SK-N-SH (cell line): ENCODE measurements at regions of chr18 and their contacts with region 1.

Region 1: DNA sequence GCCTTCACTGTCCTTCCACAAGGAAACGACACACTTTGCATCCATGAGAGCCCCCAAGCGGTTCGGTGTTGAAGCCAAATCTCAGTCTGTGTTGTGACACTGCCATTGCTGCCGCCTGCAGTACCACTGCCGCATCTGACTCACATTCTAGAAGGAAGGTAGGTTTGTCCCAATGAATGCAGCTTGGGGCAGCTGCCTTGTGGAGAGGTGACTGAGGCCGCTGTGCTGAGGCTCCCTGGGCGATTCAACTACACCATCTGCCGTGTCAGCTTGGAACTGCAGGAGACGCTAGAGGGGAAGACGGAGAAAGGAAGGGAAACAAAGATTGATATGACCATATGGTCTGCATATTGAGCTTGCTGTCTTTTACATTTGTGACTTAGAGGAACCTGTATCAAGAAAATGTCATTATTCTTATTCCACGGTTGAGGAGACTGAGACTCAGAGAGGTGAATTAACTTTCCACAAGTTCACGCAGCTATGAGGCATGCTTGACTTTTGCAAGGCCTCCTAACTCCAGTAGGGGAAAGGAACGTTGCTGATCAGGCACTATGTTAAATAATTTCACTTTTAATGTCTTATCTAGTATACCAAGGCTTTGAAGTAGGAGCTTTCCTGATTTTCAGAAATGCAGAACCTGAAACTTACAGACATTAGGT is 43.5 kb upstream of the LMAN1 start:
- DNase-seq: peak; percentile 88
- H3K4me3 ChIP-seq: peak overlapping the region in 1 of 2 experiments; percentile 57; a peak in 1 of 4 replicates
- H3K27ac ChIP-seq: no peak overlapping the region
- H3K4me1 ChIP-seq: no peaks in the 10 kb centered on the region; a peak in 1 of 4 replicates
- H3K27me3 ChIP-seq: no peaks in the 10 kb centered on the region
- CTCF ChIP-seq: peak; percentile 94
- EP300 ChIP-seq: no peak
- RAD21 ChIP-seq: peak; percentile 99

Region 2: GRCh38 chr18:59085797-59086196 is 316.8 kb before region 1 on chr18:
- CTCF ChIA-PET with region 1: interaction called, 17 read pairs
- POLR2A ChIA-PET with region 1: no interaction called
- DNase-seq: no peak
- H3K4me3 ChIP-seq: no peak overlapping the region
- H3K27ac ChIP-seq: peak overlapping the region in 1 of 2 experiments; percentile 31; a peak in 1 of 4 replicates
- H3K4me1 ChIP-seq: peaks cover 2 to 21% of the 10 kb centered on the region in 2 experiments; a peak in 3 of 4 replicates
- H3K27me3 ChIP-seq: no peaks in the 10 kb centered on the region
- CTCF ChIP-seq: no peak
- EP300 ChIP-seq: no peak
- RAD21 ChIP-seq: no peak

Region 3: GRCh38 chr18:59249205-59249774 is 153.3 kb before region 1 on chr18:
- CTCF ChIA-PET with region 1: interaction called, 143 read pairs
- POLR2A ChIA-PET with region 1: no interaction called
- DNase-seq: peak; percentile 76
- H3K4me3 ChIP-seq: peak overlapping the region in 1 of 2 experiments; percentile 4; a peak in 1 of 4 replicates
- H3K27ac ChIP-seq: no peak overlapping the region
- H3K4me1 ChIP-seq: 0 out of 4 replicates have a peak, but pooled peaks cover 0 to 4% of the 10 kb centered on the region in 2 experiments
- H3K27me3 ChIP-seq: peaks cover 17% of the 10 kb centered on the region; the same call in 1 of the 2 replicates
- CTCF ChIP-seq: peak; percentile 78
- EP300 ChIP-seq: no peak
- RAD21 ChIP-seq: peak; percentile 93

Region 4: DNA sequence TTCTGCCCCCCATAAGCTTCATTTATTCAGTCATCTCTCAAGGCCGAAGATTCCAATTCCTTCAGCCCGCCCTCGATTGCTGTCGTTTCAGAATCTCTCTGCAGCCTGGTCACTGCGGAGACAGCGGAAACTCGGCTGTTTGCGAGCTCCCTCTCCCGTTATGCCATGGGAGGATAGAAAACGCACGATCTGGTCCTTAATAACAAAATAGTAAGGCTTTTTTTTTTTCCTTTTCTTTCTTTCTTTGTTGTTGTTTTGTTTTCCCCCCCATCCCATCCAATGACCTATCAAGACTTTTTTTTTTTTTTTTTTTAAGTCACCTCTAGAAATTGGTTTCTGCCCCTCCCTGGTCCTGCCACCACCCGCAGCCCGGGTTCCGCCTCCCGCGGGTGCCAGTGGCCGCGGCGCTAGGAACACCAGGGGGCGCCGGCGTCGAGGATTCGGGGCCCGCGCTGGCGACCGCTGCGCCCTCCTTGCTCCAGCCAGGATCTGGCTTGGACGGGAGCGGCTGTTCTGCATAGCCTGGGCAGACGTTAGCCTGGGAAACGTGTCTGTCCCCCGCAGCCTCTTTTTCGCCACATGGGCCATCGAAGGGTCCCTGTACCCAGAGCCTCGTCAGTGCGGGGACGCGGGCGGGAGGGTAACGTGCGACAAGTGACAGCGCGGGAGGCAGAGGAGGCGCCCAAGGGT is 94.2 kb before region 1 on chr18:
- CTCF ChIA-PET with region 1: interaction called, 168 read pairs
- POLR2A ChIA-PET with region 1: no interaction called
- DNase-seq: peak; percentile 92
- H3K4me3 ChIP-seq: peak overlapping the region; percentile 36 to 65
- H3K27ac ChIP-seq: no peak overlapping the region
- H3K4me1 ChIP-seq: peaks cover 0 to 3% of the 10 kb centered on the region in 2 experiments; a peak in 1 of 4 replicates
- H3K27me3 ChIP-seq: peaks cover 31% of the 10 kb centered on the region; the same call in 1 of the 2 replicates
- CTCF ChIP-seq: peak; percentile 95
- EP300 ChIP-seq: no peak
- RAD21 ChIP-seq: peak; percentile 71

Region 5: DNA sequence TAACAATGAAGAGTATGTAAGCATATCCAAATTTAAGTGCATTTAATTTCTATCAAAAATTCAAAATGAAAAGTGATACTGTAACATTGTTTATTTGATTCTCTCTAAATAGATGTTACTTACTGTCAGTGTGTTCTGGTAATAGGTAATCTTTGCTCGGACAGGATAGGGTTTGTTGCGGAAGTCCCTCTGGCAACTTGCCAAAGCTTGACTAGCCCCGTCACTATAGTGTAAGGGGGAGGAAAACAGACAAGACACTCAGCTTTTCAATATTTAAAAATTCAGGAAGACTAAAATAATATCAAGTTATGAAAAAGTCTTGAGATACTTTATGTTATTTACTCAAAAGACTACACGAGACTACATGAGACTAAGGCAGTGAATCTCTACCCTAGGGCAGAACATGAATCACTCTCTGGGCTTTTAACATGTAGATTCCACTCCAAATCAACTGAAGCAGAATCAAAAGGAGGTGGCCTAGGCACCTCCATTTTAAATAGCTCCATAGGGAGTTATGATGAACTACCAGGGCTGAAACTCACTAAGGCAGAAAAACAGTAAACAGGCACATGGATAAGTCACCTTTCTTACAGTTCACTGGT is 49.4 kb before region 1 on chr18:
- CTCF ChIA-PET with region 1: interaction called, 14 read pairs
- POLR2A ChIA-PET with region 1: no interaction called
- DNase-seq: peak; percentile 5
- H3K4me3 ChIP-seq: no peak overlapping the region
- H3K27ac ChIP-seq: no peak overlapping the region
- H3K4me1 ChIP-seq: peaks cover 7 to 11% of the 10 kb centered on the region in 2 experiments; a peak in 3 of 4 replicates
- H3K27me3 ChIP-seq: no peaks in the 10 kb centered on the region
- CTCF ChIP-seq: no peak
- EP300 ChIP-seq: no peak
- RAD21 ChIP-seq: no peak

Region 6: GRCh38 chr18:59423259-59423658 is 20.7 kb after region 1 on chr18:
- CTCF ChIA-PET with region 1: interaction called, 13 read pairs
- POLR2A ChIA-PET with region 1: no interaction called
- DNase-seq: no peak
- H3K4me3 ChIP-seq: no peak overlapping the region
- H3K27ac ChIP-seq: no peak overlapping the region
- H3K4me1 ChIP-seq: peaks cover 0 to 11% of the 10 kb centered on the region in 2 experiments; a peak in 2 of 4 replicates
- H3K27me3 ChIP-seq: no peaks in the 10 kb centered on the region
- CTCF ChIP-seq: no peak
- EP300 ChIP-seq: no peak
- RAD21 ChIP-seq: no peak

Region 7: GRCh38 chr18:59639821-59640220 is 237.3 kb after region 1 on chr18:
- CTCF ChIA-PET with region 1: no interaction called
- POLR2A ChIA-PET with region 1: no interaction called
- DNase-seq: no peak
- H3K4me3 ChIP-seq: no peak overlapping the region
- H3K27ac ChIP-seq: peak overlapping the region in 1 of 2 experiments; percentile 42; a peak in 2 of 4 replicates
- H3K4me1 ChIP-seq: peaks cover 0 to 15% of the 10 kb centered on the region in 2 experiments; a peak in 1 of 4 replicates
- H3K27me3 ChIP-seq: no peaks in the 10 kb centered on the region
- CTCF ChIP-seq: no peak
- EP300 ChIP-seq: no peak
- RAD21 ChIP-seq: no peak

Region 8: GRCh38 chr18:59823596-59824195 is 421.1 kb after region 1 on chr18:
- CTCF ChIA-PET with region 1: interaction called, 45 read pairs
- POLR2A ChIA-PET with region 1: no interaction called
- DNase-seq: peak; percentile 64
- H3K4me3 ChIP-seq: no peak overlapping the region; a peak in 1 of 4 replicates
- H3K27ac ChIP-seq: peak overlapping the region in 1 of 2 experiments; percentile 54; a peak in 2 of 4 replicates
- H3K4me1 ChIP-seq: peaks cover 0 to 12% of the 10 kb centered on the region in 2 experiments; a peak in 1 of 4 replicates
- H3K27me3 ChIP-seq: no peaks in the 10 kb centered on the region
- CTCF ChIP-seq: peak; percentile 94
- EP300 ChIP-seq: no peak
- RAD21 ChIP-seq: peak; percentile 99